GM18951 (cell line): ENCODE measurements at regions of chr5 and their contacts with region 1.

Region 1: DNA sequence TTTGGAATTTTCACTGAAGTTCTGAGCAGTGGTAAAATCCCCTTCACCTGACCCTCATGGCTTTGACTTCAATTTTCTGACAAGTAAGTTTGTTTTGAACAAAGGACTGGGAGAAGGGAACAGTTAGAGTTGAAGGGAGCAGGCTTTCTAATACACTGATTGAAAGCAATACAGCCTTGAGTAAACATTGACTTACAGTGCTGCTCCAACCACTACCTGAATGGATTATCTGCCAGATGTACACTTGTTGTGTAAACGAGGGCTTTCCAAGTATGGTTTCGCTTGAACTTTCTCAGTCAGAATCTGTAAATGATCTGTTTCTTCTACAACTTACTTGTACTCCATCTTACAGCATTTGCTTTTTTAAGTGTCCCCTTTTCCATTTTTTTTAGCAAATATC is 1414.9 kb upstream of the NUDT12 start:
- POLR2A ChIP-seq: no peak

Region 2: DNA sequence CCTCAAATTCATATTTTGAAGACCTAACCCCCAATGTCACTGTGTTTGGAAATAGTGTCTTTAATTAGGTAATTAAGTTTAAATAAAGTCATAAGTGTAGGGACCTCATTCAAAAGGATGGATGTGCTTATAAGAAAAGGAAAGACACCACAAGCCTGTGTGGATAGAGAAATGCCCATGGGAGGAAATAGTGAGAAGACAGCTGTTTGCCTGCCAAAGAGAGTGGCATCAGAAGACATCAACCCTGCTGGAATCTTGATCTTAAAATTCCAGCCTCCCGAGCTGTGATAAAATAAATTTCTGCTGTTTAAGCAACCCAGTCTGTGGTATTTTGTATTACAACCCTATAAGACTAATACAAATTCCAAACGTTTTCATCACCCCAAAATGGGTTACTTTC is 453.0 kb after region 1 on chr5:
- in situ Hi-C with region 1: no loop called
- POLR2A ChIP-seq: no peak

Region 3: DNA sequence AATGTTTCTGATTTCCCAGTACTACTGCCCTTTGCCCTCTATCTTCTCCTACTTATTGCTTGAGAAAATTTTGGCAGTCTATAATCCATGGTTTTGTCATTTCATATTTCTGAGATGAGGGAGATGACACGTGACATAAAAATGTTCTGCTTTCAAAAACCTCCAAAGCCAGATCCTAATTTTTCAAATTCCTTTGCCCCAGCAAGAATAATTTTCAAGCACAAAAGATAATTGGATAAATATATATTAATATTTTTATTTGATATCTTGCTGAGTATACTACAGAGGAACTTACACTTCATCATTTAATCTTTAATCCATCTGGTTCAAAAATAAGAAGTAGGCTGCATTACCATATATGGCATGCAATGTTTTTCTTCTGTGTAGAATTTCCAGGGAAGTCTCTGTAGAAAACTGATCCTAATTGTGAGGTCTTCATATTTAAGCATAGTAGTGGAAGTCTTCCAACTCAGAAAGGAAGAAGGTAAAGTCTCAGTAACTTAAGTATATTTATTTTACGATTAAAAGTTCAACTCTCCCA is 954.4 kb after region 1 on chr5:
- in situ Hi-C with region 1: loop called (anchors 25 kb)
- POLR2A ChIP-seq: no peak

Region 4: GRCh38 chr5:106474066-106474465 is 1496.5 kb after region 1 on chr5:
- in situ Hi-C with region 1: no loop called
- POLR2A ChIP-seq: no peak